ENCODE measurements at regions of chr3 and their contacts with region 1.

Region 1: GRCh38 chr3:187738331-187739093 is 6.8 kb downstream of the BCL6 start:
- DNase-seq: peak; percentile 82
- H3K4me3 Mint-ChIP-seq: peak overlapping the region; percentile 90
- H3K27ac Mint-ChIP-seq: peak overlapping the region; percentile 99
- H3K4me1 Mint-ChIP-seq: peaks cover 44% of the 10 kb centered on the region
- H3K27me3 Mint-ChIP-seq: no peaks in the 10 kb centered on the region

Region 2: GRCh38 chr3:187714404-187714979 is 24.0 kb before region 1 on chr3:
- CTCF ChIA-PET with region 1: interaction called, 13 read pairs
- POLR2A ChIA-PET with region 1: no interaction called
- intact Hi-C with region 1: no loop called
- DNase-seq: peak; percentile 82
- H3K4me3 Mint-ChIP-seq: no peak overlapping the region
- H3K27ac Mint-ChIP-seq: no peak overlapping the region
- H3K4me1 Mint-ChIP-seq: peaks cover 12% of the 10 kb centered on the region
- H3K27me3 Mint-ChIP-seq: no peaks in the 10 kb centered on the region

Region 3: DNA sequence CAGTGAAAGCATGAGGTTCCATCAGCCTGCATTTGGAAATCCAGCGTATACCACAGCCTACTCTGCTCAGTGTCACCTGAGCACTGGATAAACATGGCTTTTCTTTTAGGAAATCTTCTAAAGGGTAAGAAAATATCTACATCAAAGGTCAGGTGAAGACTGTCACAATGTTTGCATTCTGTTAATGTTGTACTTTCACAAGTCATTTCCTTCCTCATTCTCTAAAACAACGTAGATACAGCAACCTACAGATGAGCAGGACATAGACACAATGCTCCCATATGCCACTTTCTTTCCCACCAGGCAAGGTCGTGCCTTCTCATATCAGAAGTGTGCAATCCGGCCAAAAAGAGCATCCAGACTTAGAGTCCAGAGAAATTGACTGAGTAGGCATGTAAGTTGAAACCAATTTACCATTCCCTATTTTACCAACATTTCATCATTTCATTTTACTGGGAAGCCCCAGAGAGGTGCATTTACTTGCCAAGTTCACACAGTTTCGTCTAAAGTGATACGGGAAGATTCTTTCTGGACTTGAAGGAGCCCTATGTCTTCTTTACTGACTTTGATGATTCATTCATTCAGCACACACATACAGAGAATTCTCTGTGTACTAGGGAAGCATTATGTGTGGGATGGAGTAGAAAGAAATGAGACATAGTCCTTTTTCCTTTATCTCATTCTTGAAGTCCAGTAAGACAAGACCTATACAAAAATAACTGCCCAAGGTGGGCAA is 384.8 kb after region 1 on chr3:
- CTCF ChIA-PET with region 1: interaction called, 4 read pairs
- POLR2A ChIA-PET with region 1: interaction called, 3 read pairs
- intact Hi-C with region 1: loop called (anchors 1 kb)
- DNase-seq: peak; percentile 21
- H3K4me3 Mint-ChIP-seq: no peak overlapping the region
- H3K27ac Mint-ChIP-seq: peak overlapping the region; percentile 63
- H3K4me1 Mint-ChIP-seq: peaks cover 20% of the 10 kb centered on the region
- H3K27me3 Mint-ChIP-seq: peaks cover 1% of the 10 kb centered on the region

Region 4: DNA sequence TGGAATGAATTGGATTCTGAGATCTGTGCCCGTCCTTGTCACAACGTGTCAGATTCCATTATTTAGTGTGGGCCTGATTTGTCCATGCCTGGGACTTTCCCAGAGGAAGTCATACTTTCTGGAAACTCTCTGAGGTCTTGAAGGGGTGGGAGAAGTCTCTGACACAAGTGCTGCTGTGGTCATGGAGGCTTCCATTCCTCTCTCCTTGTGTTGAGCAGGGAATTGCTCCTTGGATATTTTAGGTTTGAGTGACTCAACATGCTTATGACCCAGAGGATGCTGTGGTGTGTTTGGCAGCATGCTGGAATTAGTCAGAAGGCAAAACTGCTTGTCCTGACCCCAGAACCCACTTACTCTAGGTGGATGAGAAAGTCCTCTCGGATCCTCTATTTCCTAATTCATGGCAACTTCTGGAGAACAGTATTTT is 547.6 kb after region 1 on chr3:
- CTCF ChIA-PET with region 1: interaction called, 57 read pairs
- POLR2A ChIA-PET with region 1: interaction called, 22 read pairs
- intact Hi-C with region 1: loop called (anchors 1 kb)
- DNase-seq: peak; percentile 42
- H3K4me3 Mint-ChIP-seq: no peak overlapping the region
- H3K27ac Mint-ChIP-seq: peak overlapping the region; percentile 34
- H3K4me1 Mint-ChIP-seq: peaks cover 51% of the 10 kb centered on the region
- H3K27me3 Mint-ChIP-seq: no peaks in the 10 kb centered on the region

Region 5: GRCh38 chr3:188400494-188401243 is 662.2 kb after region 1 on chr3:
- CTCF ChIA-PET with region 1: interaction called, 15 read pairs
- POLR2A ChIA-PET with region 1: interaction called, 5 read pairs
- intact Hi-C with region 1: no loop called
- DNase-seq: peak; percentile 48
- H3K4me3 Mint-ChIP-seq: no peak overlapping the region
- H3K27ac Mint-ChIP-seq: peak overlapping the region; percentile 4
- H3K4me1 Mint-ChIP-seq: peaks cover 68% of the 10 kb centered on the region
- H3K27me3 Mint-ChIP-seq: no peaks in the 10 kb centered on the region

Region 6: GRCh38 chr3:188729422-188729821 is 990.9 kb after region 1 on chr3:
- CTCF ChIA-PET with region 1: interaction called, 10 read pairs
- POLR2A ChIA-PET with region 1: interaction called, 3 read pairs
- intact Hi-C with region 1: no loop called
- DNase-seq: no peak
- H3K4me3 Mint-ChIP-seq: no peak overlapping the region
- H3K27ac Mint-ChIP-seq: no peak overlapping the region
- H3K4me1 Mint-ChIP-seq: peaks cover 29% of the 10 kb centered on the region
- H3K27me3 Mint-ChIP-seq: peaks cover 15% of the 10 kb centered on the region

Region 7: GRCh38 chr3:188947401-188948280 is 1209.1 kb after region 1 on chr3:
- CTCF ChIA-PET with region 1: interaction called, 378 read pairs
- POLR2A ChIA-PET with region 1: interaction called, 3 read pairs
- intact Hi-C with region 1: no loop called
- DNase-seq: peak; percentile 47
- H3K4me3 Mint-ChIP-seq: no peak overlapping the region
- H3K27ac Mint-ChIP-seq: no peak overlapping the region
- H3K4me1 Mint-ChIP-seq: peaks cover 27% of the 10 kb centered on the region
- H3K27me3 Mint-ChIP-seq: peaks cover 14% of the 10 kb centered on the region

Measured in activated CD4-positive, alpha-beta memory T cell treated with anti-CD3 and anti-CD28 coated beads for 36 hours (primary cell).